ENCODE measurements at regions of chr11 and their contacts with region 1.

Region 1: DNA sequence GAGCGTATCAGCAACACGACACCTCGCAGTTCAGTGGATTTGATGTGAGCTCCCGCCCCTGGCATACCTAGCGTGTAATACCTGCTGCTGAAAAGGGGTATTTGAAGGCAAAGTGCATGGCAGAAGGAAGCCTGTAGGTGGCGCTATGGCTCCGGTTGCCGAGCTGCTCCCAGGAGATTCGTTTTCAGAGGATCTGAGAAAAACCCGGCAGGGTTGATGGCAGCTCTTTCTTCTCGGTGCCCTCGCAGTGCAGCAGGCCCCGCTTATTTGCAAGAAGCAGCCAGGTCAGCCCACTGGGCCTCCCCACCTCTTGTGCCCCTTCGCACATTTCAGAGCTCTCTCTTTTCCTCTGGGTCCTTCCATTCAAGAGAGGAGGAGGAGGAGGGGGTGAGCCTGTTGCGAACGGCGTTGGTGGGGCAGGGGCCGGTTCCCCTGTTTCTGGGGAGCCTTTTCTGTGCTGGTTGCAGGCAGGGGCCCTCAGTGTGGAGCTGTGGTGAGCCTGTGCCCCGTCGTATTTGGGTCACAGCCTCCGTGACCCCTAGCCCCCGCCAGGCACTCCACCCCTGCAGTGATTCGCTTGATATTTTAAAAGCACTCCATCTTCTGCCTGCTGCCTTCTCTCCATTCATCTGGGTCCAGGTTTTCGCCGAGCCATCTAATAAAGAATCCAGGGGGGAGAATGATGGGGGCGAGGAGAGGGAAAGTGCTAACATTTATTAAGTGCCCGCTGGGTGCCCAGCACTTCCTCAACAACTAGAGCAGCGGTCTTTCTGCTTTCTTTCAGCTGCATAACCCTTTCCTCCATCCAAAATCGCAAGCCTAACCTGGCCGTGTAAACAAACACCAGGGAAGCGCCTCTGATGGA is 85.3 kb upstream of the SYT13 start:
- DNase-seq: peak; percentile 63
- H3K4me3 ChIP-seq: no peak overlapping the region
- H3K27ac ChIP-seq: no peak overlapping the region
- H3K4me1 ChIP-seq: peaks cover 0 to 7% (median 0%) of the 10 kb centered on the region in 4 donors
- H3K27me3 ChIP-seq: peaks cover 21% of the 10 kb centered on the region
- CTCF ChIP-seq: peak; percentile 60 to 87 (median 78)
- EP300 ChIP-seq: no peak
- POLR2A ChIP-seq: no peak

Region 2: GRCh38 chr11:45332276-45332934 is 39.1 kb before region 1 on chr11:
- in situ Hi-C with region 1: no loop called
- intact Hi-C with region 1: no loop called
- DNase-seq: peak; percentile 42
- H3K4me3 ChIP-seq: no peak overlapping the region
- H3K27ac ChIP-seq: peak overlapping the region; percentile 33 to 68 (median 57)
- H3K4me1 ChIP-seq: peaks cover 0 to 10% (median 0%) of the 10 kb centered on the region in 4 donors
- H3K27me3 ChIP-seq: no peaks in the 10 kb centered on the region
- CTCF ChIP-seq: peak; percentile 48 to 88 (median 83)
- EP300 ChIP-seq: no peak
- POLR2A ChIP-seq: no peak

Region 3: DNA sequence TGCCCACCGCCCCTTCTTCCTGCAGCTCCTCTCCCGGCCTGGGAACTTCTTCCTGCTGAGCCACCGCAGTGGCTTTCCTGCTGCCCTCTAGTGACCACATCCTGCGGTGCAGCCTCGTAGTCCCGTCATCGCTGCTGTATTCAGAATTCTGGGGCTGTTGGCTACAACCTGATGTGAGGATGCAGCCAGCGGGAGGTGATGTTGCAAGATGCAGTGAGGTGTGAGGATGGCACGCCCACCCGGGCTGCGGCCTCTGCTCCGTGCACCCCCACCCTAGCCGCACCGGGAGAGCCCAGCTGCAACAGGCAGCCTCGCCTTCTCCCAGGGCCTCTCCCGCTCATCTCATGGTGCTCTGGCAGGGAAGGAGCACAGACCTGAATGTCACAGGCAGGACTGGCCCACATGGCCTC is 283.9 kb after region 1 on chr11:
- in situ Hi-C with region 1: loop called in 2 of 4 experiments (anchors 25 kb)
- intact Hi-C with region 1: loop called (anchors 10 kb)
- DNase-seq: peak; percentile 65
- H3K4me3 ChIP-seq: no peak overlapping the region
- H3K27ac ChIP-seq: no peak overlapping the region
- H3K4me1 ChIP-seq: no peaks in the 10 kb centered on the region
- H3K27me3 ChIP-seq: peaks cover 36% of the 10 kb centered on the region
- CTCF ChIP-seq: peak; percentile 71 to 88 (median 85)
- EP300 ChIP-seq: no peak
- POLR2A ChIP-seq: no peak

Region 4: GRCh38 chr11:45771566-45772448 is 400.3 kb after region 1 on chr11:
- in situ Hi-C with region 1: loop called (anchors 25 kb)
- intact Hi-C with region 1: no loop called
- DNase-seq: peak; percentile 87
- H3K4me3 ChIP-seq: peak overlapping the region; percentile 15 to 62 (median 42)
- H3K27ac ChIP-seq: peak overlapping the region; percentile 39 to 70 (median 62)
- H3K4me1 ChIP-seq: peaks cover 0 to 6% (median 0%) of the 10 kb centered on the region in 4 donors
- H3K27me3 ChIP-seq: no peaks in the 10 kb centered on the region
- CTCF ChIP-seq: peak; percentile 83 to 90 (median 86)
- EP300 ChIP-seq: no peak
- POLR2A ChIP-seq: no peak